ENCODE measurements at regions of chr2 and their contacts with region 1.

Region 1: DNA sequence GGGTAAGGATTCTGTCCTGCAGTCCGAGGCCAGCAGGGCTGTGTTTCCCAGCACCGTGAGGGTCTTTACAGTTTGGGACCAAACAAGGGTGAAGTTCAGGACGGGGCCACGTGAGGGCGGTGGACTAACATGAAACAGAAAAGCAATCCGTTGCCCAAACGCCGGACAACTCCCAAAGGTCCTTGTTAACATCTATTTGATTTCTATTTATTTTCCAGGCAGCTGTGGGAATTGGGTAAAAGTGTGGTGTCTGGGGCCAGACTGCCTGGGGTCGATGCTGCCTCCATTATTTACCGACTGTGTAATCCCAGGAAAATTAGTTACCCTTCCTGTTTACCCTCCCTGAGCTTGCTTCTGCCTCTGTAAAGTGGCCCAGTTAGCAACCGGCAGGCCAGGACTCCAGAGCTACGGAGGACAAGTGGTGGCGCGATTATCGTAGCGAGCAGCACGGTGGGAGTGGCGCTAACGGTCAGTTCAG is 66.3 kb upstream of the TCF7L1 start:
- DNase-seq: peak in 3 of 4 donors; percentile 64 to 83 (median 65)
- ATAC-seq: peak; percentile 95
- H3K4me3 ChIP-seq: no peak overlapping the region
- H3K27ac ChIP-seq: no peak overlapping the region
- H3K4me1 ChIP-seq: peaks cover 0 to 6% of the 10 kb centered on the region in 2 donors
- H3K27me3 ChIP-seq: peaks cover 0 to 6% of the 10 kb centered on the region in 2 donors
- CTCF ChIP-seq: peak; percentile 71 to 87

Region 2: DNA sequence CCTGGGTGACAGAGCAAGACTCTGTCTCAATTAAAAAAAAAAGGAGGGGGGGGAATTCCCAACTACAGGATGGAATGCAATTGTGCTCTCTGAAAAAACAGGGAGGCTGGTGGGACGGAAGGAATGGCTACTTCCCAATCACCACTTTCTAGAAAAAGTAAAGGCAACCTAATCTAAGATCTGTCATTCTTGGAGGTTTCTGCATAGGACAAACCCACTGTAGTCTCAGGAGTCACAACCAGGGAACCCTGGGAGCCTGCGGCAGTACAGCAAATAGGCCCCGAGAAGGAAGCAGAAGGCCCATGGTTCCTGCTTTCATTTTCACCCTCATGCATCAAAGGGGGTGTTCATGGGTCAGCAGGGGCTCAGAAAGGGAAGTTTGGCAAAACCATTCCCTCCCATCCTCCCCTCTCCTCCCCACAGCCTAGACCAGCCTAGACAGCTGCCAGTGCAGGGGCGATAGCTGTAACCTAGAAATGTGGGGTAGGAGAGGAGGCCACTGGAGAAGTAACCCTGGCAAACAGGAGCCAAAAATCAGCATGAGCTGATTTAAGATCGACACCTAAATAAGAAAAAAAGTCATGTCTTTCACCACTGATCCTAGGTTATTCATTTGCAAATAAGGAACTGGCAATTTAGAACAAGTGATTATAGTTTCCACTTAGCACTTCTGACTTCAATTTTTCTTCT is 234.0 kb before region 1 on chr2:
- intact Hi-C with region 1: no loop called
- DNase-seq: peak in 1 of 4 donors; percentile 57
- ATAC-seq: peak; percentile 68
- H3K4me3 ChIP-seq: no peak overlapping the region
- H3K27ac ChIP-seq: peak overlapping the region; percentile 39 to 64
- H3K4me1 ChIP-seq: peaks cover 0 to 24% of the 10 kb centered on the region in 2 donors
- H3K27me3 ChIP-seq: no peaks in the 10 kb centered on the region
- CTCF ChIP-seq: no peak

Region 3: GRCh38 chr2:85288244-85288725 is 221.4 kb after region 1 on chr2:
- intact Hi-C with region 1: loop called in 1 of 2 experiments (anchors 5 kb)
- DNase-seq: no peak
- ATAC-seq: peak; percentile 69
- H3K4me3 ChIP-seq: no peak overlapping the region
- H3K27ac ChIP-seq: peak overlapping the region in 1 of 2 donors; percentile 13
- H3K4me1 ChIP-seq: peaks cover 0 to 14% of the 10 kb centered on the region in 2 donors
- H3K27me3 ChIP-seq: no peaks in the 10 kb centered on the region
- CTCF ChIP-seq: no peak

Region 4: DNA sequence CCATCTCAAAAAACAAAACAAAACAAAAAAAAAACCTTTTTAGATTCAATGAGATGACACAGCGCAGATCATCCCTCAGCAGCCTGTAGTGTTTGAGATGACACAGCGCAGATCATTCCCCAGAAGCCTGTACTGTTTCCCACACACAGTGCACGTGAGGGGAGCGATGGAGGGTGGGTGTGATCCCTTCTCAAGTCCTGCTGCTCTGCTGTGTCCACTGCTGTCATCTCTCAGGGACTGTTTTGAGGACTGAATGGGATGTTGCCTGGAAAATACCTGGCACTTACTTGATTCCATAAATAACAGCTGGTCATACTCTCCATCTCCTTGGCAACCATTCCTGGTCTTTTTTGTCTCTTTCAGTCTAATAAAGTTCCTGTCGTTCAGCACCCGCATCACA is 235.2 kb after region 1 on chr2:
- intact Hi-C with region 1: loop called in 1 of 2 experiments (anchors 5 kb)
- DNase-seq: no peak
- ATAC-seq: no peak
- H3K4me3 ChIP-seq: no peak overlapping the region
- H3K27ac ChIP-seq: no peak overlapping the region
- H3K4me1 ChIP-seq: peaks cover 0 to 8% of the 10 kb centered on the region in 2 donors
- H3K27me3 ChIP-seq: no peaks in the 10 kb centered on the region
- CTCF ChIP-seq: no peak

Measured in left lung (tissue), 14 donors.